ENCODE measurements at regions of chr5 and their contacts with region 1.

Region 1: DNA sequence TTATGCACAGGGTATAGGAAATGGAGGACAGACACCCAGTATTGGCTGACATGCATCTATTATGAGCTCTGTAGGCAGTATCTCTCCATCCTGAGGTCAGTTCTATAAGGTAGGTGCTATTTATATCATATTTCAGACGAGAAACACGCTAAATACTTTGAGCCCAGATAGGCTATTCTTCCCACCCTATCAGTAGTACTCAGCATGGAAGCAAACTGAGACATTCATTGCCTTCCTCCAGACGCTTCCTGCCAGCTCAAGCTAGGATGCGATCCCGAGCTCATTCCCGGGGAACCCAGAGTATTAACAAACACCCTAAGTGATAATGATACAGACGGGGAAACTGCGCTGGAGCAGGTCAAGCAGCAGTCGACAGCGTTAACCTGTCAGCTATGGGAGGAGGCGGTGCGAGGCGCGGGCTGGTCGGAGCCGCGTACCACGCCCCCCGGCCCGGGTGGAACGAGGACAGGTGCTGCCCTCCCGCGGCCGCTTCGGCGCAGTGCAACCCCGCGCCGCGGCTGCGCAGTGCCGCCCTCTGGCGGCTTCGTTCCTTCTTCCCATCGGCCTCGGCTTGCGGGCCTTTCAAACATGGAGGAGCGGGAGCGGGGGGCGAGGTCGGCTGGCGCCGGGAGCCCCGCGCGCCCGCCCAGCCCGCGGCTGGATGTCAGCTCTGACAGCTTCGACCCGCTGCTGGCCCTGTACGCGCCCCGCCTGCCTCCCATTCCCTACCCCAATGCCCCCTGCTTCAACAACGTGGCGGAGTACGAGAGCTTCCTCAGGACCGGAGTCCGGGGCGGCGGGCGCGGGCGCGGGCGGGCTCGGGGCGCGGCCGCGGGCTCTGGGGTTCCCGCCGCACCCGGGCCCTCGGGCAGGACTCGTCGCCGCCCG is at the start of gene LSM11:
- DNase-seq: peak; percentile 92 to 96 (median 95)
- ATAC-seq: peak; percentile 99
- H3K4me3 ChIP-seq: peak within 1 kb of the TSS; percentile 77
- H3K4me1 ChIP-seq: peaks cover 16% of the 10 kb centered on the region
- CTCF ChIP-seq: peak; percentile 100
- total RNA-seq, gene LSM11: 3.7 to 9.5 (median 4.7) TPM

Region 2: DNA sequence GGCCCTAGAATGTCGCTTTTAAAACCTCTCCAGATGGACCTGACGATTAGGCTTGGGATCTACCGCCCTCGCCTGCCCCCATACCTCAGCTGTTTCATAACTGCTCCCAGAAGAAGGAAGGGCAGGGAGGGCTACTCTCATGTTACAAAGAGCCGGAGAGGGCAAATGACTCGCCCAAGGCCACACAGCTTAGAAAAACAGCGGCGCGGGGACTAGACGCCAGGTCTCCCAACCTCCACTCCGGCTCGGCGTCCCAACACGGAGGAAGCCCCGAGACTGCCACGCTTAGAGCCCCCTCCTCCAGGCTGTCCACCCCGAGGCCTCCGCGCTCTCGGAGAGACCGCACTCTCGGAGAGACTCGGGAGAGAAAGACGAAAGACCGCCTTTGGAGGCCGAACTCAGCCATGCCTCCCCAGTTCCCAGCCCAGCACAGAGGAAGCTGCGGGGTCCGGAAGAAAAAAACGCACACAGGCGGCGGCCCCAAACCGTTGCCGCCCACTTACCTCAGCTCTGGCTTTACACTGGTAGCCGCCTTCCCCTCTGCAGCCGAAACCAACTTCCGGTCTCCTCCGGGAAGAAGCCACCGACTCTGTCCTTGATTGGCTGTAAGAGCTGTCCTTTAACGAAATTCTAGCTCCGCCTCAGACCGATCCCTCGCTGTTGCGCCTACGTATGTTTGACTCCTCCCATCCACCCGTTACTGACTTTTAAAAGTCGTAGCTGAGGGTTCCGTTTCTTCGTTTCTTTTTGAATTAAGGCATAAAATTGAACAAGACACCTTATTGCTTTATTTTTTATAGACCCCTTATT is 600.9 kb before region 1 on chr5 and contains the start of gene MED7:
- intact Hi-C with region 1: loop called in 1 of 2 experiments (anchors 10 kb)
- DNase-seq: peak; percentile 88 to 94 (median 94)
- ATAC-seq: peak; percentile 99
- H3K4me3 ChIP-seq: peak within 1 kb of the TSS; percentile 78
- H3K4me1 ChIP-seq: peaks cover 10% of the 10 kb centered on the region
- CTCF ChIP-seq: no peak
- total RNA-seq, gene MED7: 11.8 to 14.4 (median 12.0) TPM

Region 3: DNA sequence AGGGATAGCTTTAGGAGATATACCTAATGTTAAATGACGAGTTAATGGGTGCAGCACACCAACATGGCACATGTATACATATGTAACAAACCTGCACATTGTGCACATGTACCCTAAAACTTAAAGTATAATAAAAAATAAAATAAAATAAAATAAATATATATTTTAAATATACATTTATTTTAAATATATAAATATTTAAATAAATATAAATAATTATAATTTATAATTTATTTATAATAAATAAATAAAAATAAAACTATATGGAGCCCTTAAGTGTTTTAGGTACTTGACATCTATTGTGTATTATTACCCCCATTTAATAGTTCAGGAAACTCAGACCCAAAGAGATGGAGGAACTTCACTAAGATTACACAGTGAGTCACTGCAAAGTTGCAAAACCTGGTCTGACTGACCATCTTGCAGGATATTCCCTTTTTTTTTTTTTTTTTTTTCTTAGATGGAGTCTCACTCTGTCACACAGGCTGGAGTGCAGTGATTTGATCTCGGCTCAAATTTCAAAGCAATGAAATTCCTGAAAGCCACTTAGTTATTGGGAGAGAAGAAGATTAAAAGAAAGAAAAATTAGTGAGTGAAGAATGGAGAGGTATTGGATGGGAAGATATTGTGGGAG is 77.8 kb before region 1 on chr5:
- intact Hi-C with region 1: loop called in 1 of 2 experiments (anchors 5 kb)
- DNase-seq: no peak
- ATAC-seq: no peak
- H3K4me3 ChIP-seq: no peak overlapping the region
- H3K4me1 ChIP-seq: peaks cover 10% of the 10 kb centered on the region
- CTCF ChIP-seq: no peak

Region 4: DNA sequence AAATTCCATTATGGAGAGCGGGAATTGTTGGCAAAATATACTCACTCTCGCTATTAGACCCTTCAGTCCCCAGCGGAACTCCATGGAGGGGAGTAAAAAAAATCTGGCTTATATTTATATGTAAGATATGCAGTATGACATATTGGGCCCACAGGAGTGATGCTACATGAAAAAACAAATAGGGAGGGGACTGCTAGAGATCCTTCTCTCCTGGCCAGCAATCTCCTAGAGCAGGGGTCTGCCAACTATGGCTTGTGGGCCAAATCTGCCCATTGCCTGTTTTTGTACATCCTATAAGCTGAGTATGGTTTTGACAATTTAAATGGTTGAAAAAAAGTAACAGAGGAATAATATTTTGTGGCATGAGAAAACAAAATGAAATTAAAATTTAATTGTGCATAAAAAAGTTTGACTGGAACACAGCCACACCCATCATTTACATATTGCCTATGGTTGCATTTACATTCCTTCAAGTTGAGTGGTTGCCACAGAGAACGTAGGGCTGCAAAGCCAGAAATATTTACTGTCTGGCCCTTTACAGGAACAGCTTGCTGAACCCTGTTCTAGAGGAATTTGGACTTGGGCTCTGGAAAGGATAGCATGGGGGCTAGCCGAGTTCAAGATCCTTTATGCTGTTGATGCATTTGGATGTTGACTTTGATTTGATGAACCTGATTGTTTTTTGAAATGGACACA is 312.9 kb after region 1 on chr5:
- intact Hi-C with region 1: no loop called
- DNase-seq: no peak
- ATAC-seq: peak; percentile 42
- H3K4me3 ChIP-seq: no peak overlapping the region
- H3K4me1 ChIP-seq: peaks cover 6% of the 10 kb centered on the region
- CTCF ChIP-seq: no peak